ENCODE measurements at regions of chr9 and their contacts with region 1.

Region 1: GRCh38 chr9:137034863-137035761 is 3.2 kb upstream of the FUT7 start:
- DNase-seq: peak; percentile 91
- H3K4me3 Mint-ChIP-seq: peak overlapping the region; percentile 61
- H3K27ac Mint-ChIP-seq: peak overlapping the region; percentile 92
- H3K4me1 Mint-ChIP-seq: peaks cover 42% of the 10 kb centered on the region
- H3K27me3 Mint-ChIP-seq: no peaks in the 10 kb centered on the region

Region 2: GRCh38 chr9:136545966-136546698 is 489.0 kb before region 1 on chr9 and contains the start of gene NOTCH1:
- CTCF ChIA-PET with region 1: no interaction called
- POLR2A ChIA-PET with region 1: no interaction called
- DNase-seq: peak; percentile 88
- H3K4me3 Mint-ChIP-seq: peak within 1 kb of the TSS; percentile 88
- H3K27ac Mint-ChIP-seq: peak within 1 kb of the TSS; percentile 92
- H3K4me1 Mint-ChIP-seq: peaks cover 40% of the 10 kb centered on the region
- H3K27me3 Mint-ChIP-seq: no peaks in the 10 kb centered on the region
- total RNA-seq, gene NOTCH1: 73.6 to 74.4 TPM

Region 3: DNA sequence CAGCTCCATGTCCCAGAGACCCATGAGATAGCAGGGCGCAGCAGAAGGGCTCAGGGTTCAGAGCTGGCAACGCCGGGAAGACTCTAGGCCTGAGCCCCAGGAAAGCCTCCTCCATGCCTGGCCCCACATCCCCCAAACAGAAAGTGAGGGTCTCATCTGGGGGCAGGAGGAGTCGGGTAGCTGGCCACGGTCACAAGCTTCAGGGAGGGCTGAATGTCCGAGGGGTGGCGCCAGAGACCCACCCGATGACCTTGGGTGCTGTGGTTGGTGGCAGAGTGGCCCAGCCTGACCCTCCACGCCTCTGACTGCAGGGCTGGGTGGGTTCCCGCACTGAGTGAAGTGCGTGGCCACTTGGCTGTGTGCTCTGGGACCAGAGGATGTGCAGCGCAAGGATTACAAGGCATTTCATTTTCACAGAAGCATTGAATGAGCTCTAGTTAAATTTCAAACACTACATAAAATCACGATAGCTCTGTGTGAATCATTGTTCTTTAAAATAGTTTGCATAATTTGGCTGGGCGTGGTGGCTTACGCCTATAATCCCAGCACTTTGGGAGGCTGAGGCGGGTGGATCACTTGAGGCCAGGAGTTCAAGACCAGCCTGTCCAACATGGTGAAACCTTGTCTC is 87.0 kb before region 1 on chr9:
- CTCF ChIA-PET with region 1: interaction called, 13 read pairs
- POLR2A ChIA-PET with region 1: no interaction called
- DNase-seq: no peak
- H3K4me3 Mint-ChIP-seq: peak overlapping the region; percentile 85
- H3K27ac Mint-ChIP-seq: no peak overlapping the region
- H3K4me1 Mint-ChIP-seq: peaks cover 19% of the 10 kb centered on the region
- H3K27me3 Mint-ChIP-seq: no peaks in the 10 kb centered on the region

Region 4: DNA sequence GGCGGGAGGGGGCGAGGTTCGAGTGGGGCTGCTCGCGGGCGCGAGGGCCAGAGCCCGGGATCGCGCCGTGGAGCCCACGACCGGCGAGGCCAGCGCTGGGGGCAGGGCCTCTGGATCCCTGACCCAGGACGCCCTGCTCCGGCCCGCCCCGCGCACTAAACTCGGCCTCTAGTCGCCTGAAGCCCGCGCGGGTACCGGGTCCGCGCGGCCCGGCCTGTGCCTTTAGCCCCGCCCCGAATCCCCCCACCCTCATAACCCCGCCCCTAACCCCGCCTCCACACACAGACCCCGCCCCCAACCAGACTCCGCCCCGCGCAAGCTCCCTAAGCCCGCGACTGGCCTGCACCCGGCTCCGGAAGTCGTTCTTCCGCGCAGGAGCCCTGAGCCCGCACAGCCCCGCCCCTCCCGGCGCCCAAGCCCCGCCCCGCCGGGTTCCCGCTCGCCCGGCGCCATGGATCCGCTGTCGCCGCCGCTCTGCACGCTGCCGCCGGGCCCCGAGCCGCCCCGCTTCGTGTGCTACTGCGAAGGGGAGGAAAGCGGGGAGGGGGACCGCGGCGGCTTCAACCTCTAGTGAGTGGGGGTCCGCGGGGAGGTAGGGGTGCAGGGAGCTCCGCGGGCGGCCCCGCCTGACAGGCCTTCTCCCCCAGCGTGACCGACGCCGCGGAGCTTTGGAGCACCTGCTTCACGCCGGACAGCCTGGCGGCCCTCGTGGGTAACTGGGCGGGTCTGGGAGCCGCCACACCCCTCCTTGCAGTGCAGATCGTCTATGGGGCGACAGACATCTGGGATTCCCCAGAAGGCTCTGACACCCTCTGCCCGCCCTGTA is 42.9 kb before region 1 on chr9 and contains the start of gene PAXX:
- CTCF ChIA-PET with region 1: interaction called, 16 read pairs
- POLR2A ChIA-PET with region 1: no interaction called
- DNase-seq: peak; percentile 93
- H3K4me3 Mint-ChIP-seq: peak within 1 kb of the TSS; percentile 82
- H3K27ac Mint-ChIP-seq: peak within 1 kb of the TSS; percentile 86
- H3K4me1 Mint-ChIP-seq: peaks cover 25% of the 10 kb centered on the region
- H3K27me3 Mint-ChIP-seq: peaks cover 12% of the 10 kb centered on the region
- total RNA-seq, gene PAXX: 80.2 to 98.4 TPM

Region 5: GRCh38 chr9:137021979-137022619 is 13.0 kb before region 1 on chr9:
- CTCF ChIA-PET with region 1: interaction called, 59 read pairs
- POLR2A ChIA-PET with region 1: no interaction called
- DNase-seq: peak; percentile 75
- H3K4me3 Mint-ChIP-seq: no peak overlapping the region
- H3K27ac Mint-ChIP-seq: no peak overlapping the region
- H3K4me1 Mint-ChIP-seq: peaks cover 16% of the 10 kb centered on the region
- H3K27me3 Mint-ChIP-seq: no peaks in the 10 kb centered on the region

Region 6: GRCh38 chr9:137070201-137070905 is 35.2 kb after region 1 on chr9 and contains the start of gene SAPCD2:
- CTCF ChIA-PET with region 1: interaction called, 157 read pairs
- POLR2A ChIA-PET with region 1: no interaction called
- DNase-seq: peak; percentile 92
- H3K4me3 Mint-ChIP-seq: peak within 1 kb of the TSS; percentile 82
- H3K27ac Mint-ChIP-seq: peak within 1 kb of the TSS; percentile 91
- H3K4me1 Mint-ChIP-seq: peaks cover 28% of the 10 kb centered on the region
- H3K27me3 Mint-ChIP-seq: no peaks in the 10 kb centered on the region
- total RNA-seq, gene SAPCD2: 33.8 to 40.6 TPM

Region 7: DNA sequence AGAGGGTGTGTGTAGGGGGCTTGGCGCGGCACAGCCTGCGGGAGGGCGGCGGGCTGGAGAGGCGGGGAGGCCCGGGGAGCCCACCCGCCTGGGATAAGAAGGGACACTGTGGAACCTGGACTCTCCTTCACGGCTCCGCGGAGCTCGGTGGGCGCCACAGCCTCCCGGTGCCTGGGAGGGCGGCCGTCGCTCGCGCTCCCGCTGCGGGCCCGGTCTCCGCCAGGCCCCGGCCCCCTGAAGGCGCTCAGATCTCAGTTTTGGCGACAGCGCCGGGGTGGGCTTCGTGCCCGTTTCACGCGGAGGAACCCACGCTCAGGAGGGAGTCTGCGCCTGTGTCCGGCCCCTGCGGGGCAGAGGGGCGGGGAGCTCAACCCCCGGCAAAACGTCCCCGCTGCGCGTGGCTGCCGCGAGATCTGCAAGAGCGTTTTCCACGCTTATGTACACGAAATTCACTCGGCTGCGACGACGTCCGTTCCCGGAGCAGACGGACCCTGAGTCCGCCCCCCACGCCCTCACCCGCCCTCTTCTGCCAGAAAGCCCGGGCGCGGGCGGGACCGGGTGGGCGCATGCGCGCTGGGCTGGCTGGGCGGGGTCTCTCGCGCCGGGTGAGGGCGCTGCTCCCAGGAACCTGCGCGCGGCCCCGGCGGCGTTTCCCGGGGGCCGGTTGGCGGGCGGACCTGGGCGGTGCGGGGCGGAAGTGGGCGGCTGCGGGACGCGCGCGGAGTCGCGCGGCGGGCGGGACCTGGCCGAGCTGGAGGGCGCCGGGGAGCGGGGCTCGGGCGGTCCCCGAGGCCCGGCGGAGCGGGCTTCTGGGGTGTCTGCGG is 219.7 kb after region 1 on chr9 and contains the start of gene NELFB:
- CTCF ChIA-PET with region 1: no interaction called
- POLR2A ChIA-PET with region 1: no interaction called
- DNase-seq: peak; percentile 93
- H3K4me3 Mint-ChIP-seq: peak within 1 kb of the TSS; percentile 90
- H3K27ac Mint-ChIP-seq: peak within 1 kb of the TSS; percentile 87
- H3K4me1 Mint-ChIP-seq: peaks cover 18% of the 10 kb centered on the region
- H3K27me3 Mint-ChIP-seq: no peaks in the 10 kb centered on the region
- total RNA-seq, gene NELFB: 54.1 to 66.6 TPM